ENCODE measurements at regions of chr19 and their contacts with region 1.

Region 1: GRCh38 chr19:34733826-34734600 is at the start of gene ZNF181:
- DNase-seq: peak; percentile 90
- H3K4me3 ChIP-seq: peak within 1 kb of the TSS; percentile 66 to 87
- H3K27ac ChIP-seq: peak within 1 kb of the TSS; percentile 93 to 94
- H3K4me1 ChIP-seq: no peaks in the 10 kb centered on the region
- H3K27me3 ChIP-seq: no peaks in the 10 kb centered on the region
- CTCF ChIP-seq: peak in 2 of 4 experiments; percentile 10 to 30
- POLR2A ChIP-seq: peak; percentile 24
- total RNA-seq, gene ZNF181: 18.1 to 38.1 TPM

Region 2: GRCh38 chr19:34677386-34678084 is 56.5 kb before region 1 on chr19 and contains the start of gene ZNF302:
- intact Hi-C with region 1: loop called (anchors 5 kb)
- DNase-seq: peak; percentile 97
- H3K4me3 ChIP-seq: peak within 1 kb of the TSS; percentile 74 to 82
- H3K27ac ChIP-seq: peak within 1 kb of the TSS; percentile 90 to 94
- H3K4me1 ChIP-seq: no peaks in the 10 kb centered on the region
- H3K27me3 ChIP-seq: no peaks in the 10 kb centered on the region
- CTCF ChIP-seq: peak in 1 of 4 experiments; percentile 29
- POLR2A ChIP-seq: no peak
- total RNA-seq, gene ZNF302: 20.0 to 25.0 TPM

Region 3: DNA sequence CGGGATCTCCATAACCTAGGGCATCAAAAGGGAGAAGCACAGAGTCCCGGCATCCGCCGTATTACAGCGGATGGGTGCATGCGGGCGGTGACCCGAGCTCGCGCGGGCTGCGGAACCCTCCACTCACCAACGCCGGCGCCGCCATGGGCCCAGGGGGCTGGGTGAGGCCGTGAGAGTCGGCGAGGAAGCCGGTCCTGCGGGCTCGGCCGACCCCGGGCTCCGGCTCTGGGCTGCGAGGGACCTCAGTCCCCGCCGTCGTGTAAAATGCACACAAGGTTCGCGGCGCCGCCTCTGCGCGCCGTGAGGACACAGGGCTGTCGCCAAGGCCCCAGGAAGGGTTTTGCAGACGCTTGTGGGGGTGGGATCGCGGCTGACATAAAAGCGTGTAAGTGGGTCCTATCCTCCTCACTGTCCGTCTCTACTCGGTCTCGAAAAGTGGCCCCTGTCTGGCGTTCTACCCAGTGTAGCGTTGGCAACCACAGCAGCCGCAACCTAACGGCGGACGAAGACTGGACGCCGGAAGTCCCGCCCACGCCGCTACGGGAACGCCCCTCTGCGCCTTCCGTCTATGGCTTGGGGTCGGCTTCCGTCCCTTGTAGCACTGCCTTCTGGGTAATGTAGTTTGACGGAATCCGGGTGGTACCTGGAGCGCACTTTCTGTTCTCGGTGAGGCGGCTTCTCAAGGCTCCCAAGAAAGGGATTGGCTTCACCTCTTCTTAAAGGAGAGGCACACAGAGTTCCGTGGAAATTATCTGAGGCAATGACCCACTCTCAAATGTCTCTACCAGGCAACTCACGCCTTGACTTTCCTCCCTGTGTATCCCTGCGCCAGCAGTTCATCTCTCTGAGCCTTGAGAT is 38.9 kb after region 1 on chr19 and contains the start of gene ZNF599:
- intact Hi-C with region 1: loop called (anchors 5 kb)
- DNase-seq: peak; percentile 90
- H3K4me3 ChIP-seq: peak within 1 kb of the TSS; percentile 68 to 74
- H3K27ac ChIP-seq: peak within 1 kb of the TSS; percentile 59 to 73
- H3K4me1 ChIP-seq: no peaks in the 10 kb centered on the region
- H3K27me3 ChIP-seq: no peaks in the 10 kb centered on the region
- CTCF ChIP-seq: peak in 1 of 4 experiments; percentile 15
- POLR2A ChIP-seq: peak; percentile 31
- total RNA-seq, gene ZNF599: 14.8 to 19.3 TPM

Region 4: DNA sequence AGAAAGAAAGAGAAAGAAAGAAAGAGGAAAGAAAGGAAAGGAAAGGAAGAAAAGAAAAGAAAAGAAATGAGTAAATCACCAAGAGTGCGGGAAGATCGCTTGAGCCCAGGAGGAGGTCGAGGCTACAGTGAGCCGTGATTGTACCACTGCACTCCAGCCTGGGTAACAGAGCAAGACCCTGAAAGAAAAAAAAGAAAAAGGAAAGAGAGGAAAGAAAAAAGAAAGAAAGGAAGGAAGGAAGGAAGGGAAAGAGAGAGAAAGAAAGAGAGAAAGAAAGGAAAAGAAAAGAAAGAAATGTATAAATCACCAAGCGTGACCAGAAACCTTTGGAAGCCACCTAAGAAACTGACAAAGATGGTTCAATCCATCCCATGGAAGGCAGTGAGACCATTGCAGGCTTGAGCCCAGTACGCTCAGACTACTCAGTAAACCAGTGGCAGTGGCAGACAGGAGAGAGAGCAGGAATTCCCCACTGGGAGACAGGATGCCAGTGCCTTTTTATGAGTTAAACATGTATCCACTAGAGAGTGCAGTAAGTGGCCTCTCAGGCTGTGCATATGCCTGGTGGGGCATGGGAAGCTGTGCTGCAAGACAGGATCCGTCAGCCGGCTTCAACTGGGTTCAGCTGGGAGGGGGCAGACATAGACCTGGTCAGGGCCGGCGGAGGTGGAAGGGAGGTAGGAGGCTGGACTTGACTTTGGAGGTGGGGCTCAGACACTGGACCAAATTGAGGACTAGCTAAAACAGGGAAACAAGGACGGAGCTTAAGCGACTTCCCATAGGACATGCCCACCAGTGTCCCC is 641.7 kb after region 1 on chr19:
- intact Hi-C with region 1: no loop called
- DNase-seq: no peak
- H3K4me3 ChIP-seq: no peak overlapping the region
- H3K27ac ChIP-seq: no peak overlapping the region
- H3K4me1 ChIP-seq: no peaks in the 10 kb centered on the region
- H3K27me3 ChIP-seq: no peaks in the 10 kb centered on the region
- CTCF ChIP-seq: no peak
- POLR2A ChIP-seq: no peak